Activated CD4-positive, alpha-beta T cell treated with anti-CD3 and anti-CD28 coated beads, Interleukin-2, amount 10 ng/mL, durations not matched to agents 7 days and 5 days (primary cell): ENCODE measurements at regions of chr12 and their contacts with region 1.

Region 1: DNA sequence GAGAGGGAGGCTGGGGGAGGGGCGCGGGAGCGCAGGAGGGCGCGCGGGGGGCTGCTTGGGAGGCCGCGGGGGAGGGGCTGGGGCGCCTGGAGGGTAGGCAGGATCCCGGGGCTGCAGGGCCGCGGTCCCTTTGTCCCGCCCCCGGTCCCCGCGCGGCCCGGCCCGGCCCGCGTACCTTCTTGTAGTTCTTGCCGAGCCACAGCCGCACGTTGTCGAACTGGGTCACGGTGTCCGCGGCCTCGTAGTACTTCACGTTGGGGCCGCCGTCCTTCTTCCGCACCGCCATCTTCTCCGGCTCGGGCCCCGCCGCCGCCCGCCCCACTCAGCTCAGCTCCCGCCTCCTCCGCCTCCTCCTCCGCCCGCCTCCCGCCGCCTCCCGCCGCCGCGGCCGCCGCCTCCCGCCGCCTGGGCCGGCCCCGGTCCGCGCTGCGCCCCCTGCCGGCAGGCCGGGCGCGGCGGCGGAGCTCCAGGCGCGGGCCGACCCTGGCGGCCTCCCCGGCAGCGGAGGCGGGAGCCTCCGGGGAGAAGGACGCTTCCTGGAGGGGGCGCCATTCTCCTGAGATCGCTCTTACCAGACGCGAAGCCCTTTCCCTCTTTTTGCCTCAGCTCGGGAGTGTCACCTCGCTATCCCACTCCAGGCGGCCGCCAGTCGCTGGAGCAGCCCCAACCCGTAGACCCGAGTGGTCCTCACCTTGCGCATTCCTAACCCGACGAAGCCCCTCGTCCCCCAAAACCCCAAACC is at the start of gene SMARCC2:
- DNase-seq: peak; percentile 86
- H3K4me3 Mint-ChIP-seq: peak within 1 kb of the TSS; percentile 90
- H3K27ac Mint-ChIP-seq: peak within 1 kb of the TSS; percentile 93
- H3K4me1 Mint-ChIP-seq: peaks cover 58% of the 10 kb centered on the region
- H3K27me3 Mint-ChIP-seq: no peaks in the 10 kb centered on the region
- total RNA-seq, gene SMARCC2: 140 to 173 TPM

Region 2: GRCh38 chr12:56117778-56118687 is 71.3 kb before region 1 on chr12 and contains the start of gene ZC3H10:
- CTCF ChIA-PET with region 1: interaction called, 90 read pairs
- POLR2A ChIA-PET with region 1: interaction called, 5 read pairs
- DNase-seq: peak; percentile 99
- H3K4me3 Mint-ChIP-seq: peak within 1 kb of the TSS; percentile 95
- H3K27ac Mint-ChIP-seq: peak within 1 kb of the TSS; percentile 97
- H3K4me1 Mint-ChIP-seq: peaks cover 37% of the 10 kb centered on the region
- H3K27me3 Mint-ChIP-seq: no peaks in the 10 kb centered on the region
- total RNA-seq, gene ZC3H10: 8.2 to 9.1 TPM

Region 3: GRCh38 chr12:56158029-56158925 is 31.1 kb before region 1 on chr12 and contains the start of gene MYL6:
- CTCF ChIA-PET with region 1: interaction called, 80 read pairs
- POLR2A ChIA-PET with region 1: interaction called, 3 read pairs
- DNase-seq: peak; percentile 98
- H3K4me3 Mint-ChIP-seq: peak within 1 kb of the TSS; percentile 90
- H3K27ac Mint-ChIP-seq: peak within 1 kb of the TSS; percentile 93
- H3K4me1 Mint-ChIP-seq: peaks cover 60% of the 10 kb centered on the region
- H3K27me3 Mint-ChIP-seq: no peaks in the 10 kb centered on the region
- total RNA-seq, gene MYL6: 1,336 to 1,525 TPM

Region 4: GRCh38 chr12:56206457-56207166 is 17.3 kb after region 1 on chr12:
- CTCF ChIA-PET with region 1: interaction called, 99 read pairs
- POLR2A ChIA-PET with region 1: no interaction called
- DNase-seq: peak; percentile 50
- H3K4me3 Mint-ChIP-seq: no peak overlapping the region
- H3K27ac Mint-ChIP-seq: no peak overlapping the region
- H3K4me1 Mint-ChIP-seq: no peaks in the 10 kb centered on the region
- H3K27me3 Mint-ChIP-seq: no peaks in the 10 kb centered on the region

Region 5: DNA sequence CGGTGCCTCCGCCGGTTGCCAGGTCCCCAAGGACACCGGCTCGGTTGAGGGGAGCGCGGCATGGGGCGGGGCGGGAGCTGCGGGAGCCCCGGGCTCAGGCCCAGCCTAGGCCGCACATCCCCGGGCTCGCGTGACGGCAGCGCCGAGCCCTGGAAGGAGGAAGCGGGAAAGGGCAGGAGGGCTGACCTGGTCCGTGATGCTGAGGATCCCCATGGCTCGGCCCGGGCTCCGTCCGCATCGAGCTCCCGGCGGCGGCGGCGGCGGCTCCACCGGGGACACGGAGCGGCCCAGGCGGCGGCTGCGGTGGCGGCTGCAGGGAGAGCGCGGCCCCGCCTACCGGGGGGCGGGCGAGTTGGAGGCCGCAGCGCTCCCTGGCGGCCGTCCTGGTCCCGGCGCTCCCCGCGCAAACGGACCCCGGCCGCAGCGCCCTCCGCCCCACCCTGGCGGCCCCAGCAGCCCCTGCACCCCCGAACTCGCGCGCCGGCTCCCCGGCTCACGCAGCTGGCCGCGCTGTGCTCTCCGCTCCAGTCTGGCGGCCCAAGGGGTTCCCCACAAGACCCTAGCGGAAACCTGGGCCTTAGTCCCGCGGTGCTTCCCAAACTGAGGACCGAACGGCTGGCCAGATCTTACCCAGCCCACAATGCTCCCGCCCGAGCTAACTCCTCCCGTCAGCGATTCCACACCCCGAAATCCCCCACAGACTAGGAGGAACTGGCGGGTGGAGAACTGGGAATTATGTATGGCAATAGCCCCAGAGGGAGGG is 68.9 kb after region 1 on chr12 and contains the start of gene ANKRD52:
- CTCF ChIA-PET with region 1: interaction called, 12 read pairs
- POLR2A ChIA-PET with region 1: no interaction called
- DNase-seq: peak; percentile 76
- H3K4me3 Mint-ChIP-seq: peak within 1 kb of the TSS; percentile 88
- H3K27ac Mint-ChIP-seq: peak within 1 kb of the TSS; percentile 88
- H3K4me1 Mint-ChIP-seq: peaks cover 19% of the 10 kb centered on the region
- H3K27me3 Mint-ChIP-seq: no peaks in the 10 kb centered on the region
- total RNA-seq, gene ANKRD52: 39.0 to 45.9 TPM

Region 6: GRCh38 chr12:56425193-56425592 is 235.8 kb after region 1 on chr12:
- CTCF ChIA-PET with region 1: no interaction called
- POLR2A ChIA-PET with region 1: no interaction called
- DNase-seq: no peak
- H3K4me3 Mint-ChIP-seq: no peak overlapping the region
- H3K27ac Mint-ChIP-seq: peak overlapping the region; percentile 56
- H3K4me1 Mint-ChIP-seq: peaks cover 7% of the 10 kb centered on the region
- H3K27me3 Mint-ChIP-seq: no peaks in the 10 kb centered on the region

Region 7: DNA sequence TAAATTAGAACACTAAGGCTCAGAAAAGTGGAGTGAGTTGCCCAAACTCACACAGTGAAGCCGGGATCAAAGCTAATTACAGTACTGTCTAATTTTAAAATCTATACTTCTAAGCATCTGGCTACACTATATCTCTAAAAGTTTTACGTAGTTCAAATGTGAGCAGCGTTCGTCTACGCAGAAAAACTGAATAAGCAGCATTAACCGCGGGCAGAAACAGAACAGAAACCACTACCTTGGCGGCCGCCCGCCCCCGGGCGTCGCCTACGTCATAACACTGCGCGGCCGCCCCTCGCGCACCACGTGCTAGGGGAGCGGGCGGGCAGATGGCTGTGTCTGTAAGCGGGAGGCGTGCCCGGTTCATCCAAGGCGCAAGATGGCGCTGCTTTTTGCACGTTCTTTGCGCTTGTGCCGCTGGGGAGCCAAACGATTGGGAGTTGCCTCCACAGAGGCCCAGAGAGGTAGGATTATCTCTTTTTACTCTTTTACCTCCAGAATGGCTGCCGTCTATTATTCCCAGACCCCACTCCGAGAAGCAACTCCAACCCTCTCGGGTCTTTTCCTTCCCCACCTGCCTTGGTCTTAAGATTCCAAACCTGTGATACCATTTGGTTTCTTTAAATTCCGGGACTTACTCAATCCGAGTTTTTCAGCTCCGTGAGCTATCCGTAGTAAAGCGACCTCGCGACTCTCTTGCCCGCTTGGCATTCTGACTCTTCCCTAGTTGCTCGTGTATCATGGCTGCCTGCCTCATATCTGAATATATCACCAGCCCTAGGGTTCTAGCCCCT is 279.1 kb after region 1 on chr12 and contains the start of gene SPRYD4:
- CTCF ChIA-PET with region 1: interaction called, 14 read pairs
- POLR2A ChIA-PET with region 1: no interaction called
- DNase-seq: peak; percentile 95
- H3K4me3 Mint-ChIP-seq: peak within 1 kb of the TSS; percentile 88
- H3K27ac Mint-ChIP-seq: peak within 1 kb of the TSS; percentile 98
- H3K4me1 Mint-ChIP-seq: peaks cover 30% of the 10 kb centered on the region
- H3K27me3 Mint-ChIP-seq: no peaks in the 10 kb centered on the region
- total RNA-seq, gene SPRYD4: 3.8 to 3.9 TPM